Right cardiac atrium (tissue), 5 donors: ENCODE measurements at regions of chr18 and their contacts with region 1.

Region 1: DNA sequence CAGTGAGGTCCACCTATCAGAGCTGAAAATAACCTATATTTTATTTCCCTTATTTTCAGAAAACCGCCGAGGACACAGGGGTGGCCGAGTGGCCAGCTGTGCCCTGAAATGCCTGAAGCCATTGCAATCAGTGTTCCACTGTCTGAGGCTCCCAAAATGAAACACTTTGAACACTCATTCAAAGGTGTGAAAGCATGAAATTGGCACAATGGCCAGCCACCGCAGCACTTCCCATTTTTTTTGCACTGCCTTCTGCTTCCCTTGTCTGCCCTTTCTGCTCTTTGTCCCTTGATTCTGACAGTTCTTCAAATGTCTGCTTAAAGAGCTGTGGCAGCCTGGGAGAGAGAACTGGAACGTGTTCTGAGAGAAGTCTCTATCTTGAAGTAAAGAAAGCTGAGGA is 1127.5 kb upstream of the CELF4 start:
- DNase-seq: no peak
- ATAC-seq: peak in 1 of 2 donors; percentile 38
- H3K4me3 ChIP-seq: no peak overlapping the region
- H3K27ac ChIP-seq: no peak overlapping the region
- H3K4me1 ChIP-seq: no peaks in the 10 kb centered on the region
- H3K27me3 ChIP-seq: no peaks in the 10 kb centered on the region

Region 2: GRCh38 chr18:38654946-38655345 is 38.2 kb before region 1 on chr18:
- intact Hi-C with region 1: loop called in 1 of 4 experiments (anchors 5 kb)
- DNase-seq: no peak
- ATAC-seq: no peak
- H3K4me3 ChIP-seq: no peak overlapping the region
- H3K27ac ChIP-seq: no peak overlapping the region
- H3K4me1 ChIP-seq: no peaks in the 10 kb centered on the region
- H3K27me3 ChIP-seq: no peaks in the 10 kb centered on the region

Region 3: GRCh38 chr18:38759457-38759856 is 66.4 kb after region 1 on chr18:
- intact Hi-C with region 1: no loop called
- DNase-seq: no peak
- ATAC-seq: no peak
- H3K4me3 ChIP-seq: no peak overlapping the region
- H3K27ac ChIP-seq: no peak overlapping the region
- H3K4me1 ChIP-seq: no peaks in the 10 kb centered on the region
- H3K27me3 ChIP-seq: no peaks in the 10 kb centered on the region